ENCODE measurements at regions of chr4 and their contacts with region 1.

Region 1: DNA sequence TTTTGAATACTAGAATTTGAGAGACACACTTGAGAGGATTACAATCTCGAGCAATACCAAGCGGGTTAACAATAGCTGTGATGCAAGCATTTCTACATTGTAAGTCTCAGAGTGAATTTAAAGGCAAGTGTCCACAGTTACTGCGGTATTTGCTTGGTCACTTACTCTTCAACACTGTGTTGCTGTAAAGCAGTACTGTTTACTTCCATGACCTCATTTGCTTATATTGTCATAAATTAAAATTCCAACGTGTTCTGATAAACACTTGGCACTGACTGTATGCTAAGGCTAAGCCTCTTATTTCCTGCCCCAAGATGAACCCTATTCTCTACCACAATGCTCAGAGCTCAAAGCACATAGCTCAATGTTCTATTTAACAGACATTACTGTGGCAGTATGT is 11.1 kb downstream of the EXOC1L start:
- DNase-seq: no peak
- H3K4me3 ChIP-seq: no peak overlapping the region
- H3K27ac ChIP-seq: no peak overlapping the region
- H3K4me1 ChIP-seq: no peaks in the 10 kb centered on the region
- H3K27me3 ChIP-seq: peaks cover 14% of the 10 kb centered on the region
- CTCF ChIP-seq: no peak
- EP300 ChIP-seq: no peak
- POLR2A ChIP-seq: no peak

Region 2: DNA sequence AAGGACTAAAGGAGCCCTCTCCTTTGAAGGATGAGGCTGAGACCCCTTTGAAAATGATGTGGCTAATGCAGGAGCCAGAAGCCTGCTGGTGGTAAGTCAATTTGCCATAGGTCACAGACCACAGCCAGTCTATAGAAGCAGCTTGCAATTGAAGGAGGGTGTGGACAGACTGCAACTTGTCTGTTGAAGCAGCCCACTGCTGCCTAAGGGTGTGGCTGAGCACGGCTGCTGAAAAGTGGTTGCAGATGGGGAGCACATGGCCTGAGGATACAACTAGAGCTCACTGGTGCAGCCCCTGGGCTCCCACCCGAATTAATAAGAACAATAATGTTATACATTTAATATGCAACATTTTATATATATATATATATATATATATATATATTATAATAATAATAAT is 22.5 kb before region 1 on chr4:
- in situ Hi-C with region 1: no loop called
- intact Hi-C with region 1: loop called (anchors 1 kb)
- DNase-seq: no peak
- H3K4me3 ChIP-seq: no peak overlapping the region
- H3K27ac ChIP-seq: no peak overlapping the region
- H3K4me1 ChIP-seq: no peaks in the 10 kb centered on the region
- H3K27me3 ChIP-seq: no peaks in the 10 kb centered on the region
- CTCF ChIP-seq: no peak
- EP300 ChIP-seq: no peak
- POLR2A ChIP-seq: no peak

Measured in transverse colon (tissue), 4 donors.